ENCODE measurements at regions of chr4 and their contacts with region 1.

Region 1: DNA sequence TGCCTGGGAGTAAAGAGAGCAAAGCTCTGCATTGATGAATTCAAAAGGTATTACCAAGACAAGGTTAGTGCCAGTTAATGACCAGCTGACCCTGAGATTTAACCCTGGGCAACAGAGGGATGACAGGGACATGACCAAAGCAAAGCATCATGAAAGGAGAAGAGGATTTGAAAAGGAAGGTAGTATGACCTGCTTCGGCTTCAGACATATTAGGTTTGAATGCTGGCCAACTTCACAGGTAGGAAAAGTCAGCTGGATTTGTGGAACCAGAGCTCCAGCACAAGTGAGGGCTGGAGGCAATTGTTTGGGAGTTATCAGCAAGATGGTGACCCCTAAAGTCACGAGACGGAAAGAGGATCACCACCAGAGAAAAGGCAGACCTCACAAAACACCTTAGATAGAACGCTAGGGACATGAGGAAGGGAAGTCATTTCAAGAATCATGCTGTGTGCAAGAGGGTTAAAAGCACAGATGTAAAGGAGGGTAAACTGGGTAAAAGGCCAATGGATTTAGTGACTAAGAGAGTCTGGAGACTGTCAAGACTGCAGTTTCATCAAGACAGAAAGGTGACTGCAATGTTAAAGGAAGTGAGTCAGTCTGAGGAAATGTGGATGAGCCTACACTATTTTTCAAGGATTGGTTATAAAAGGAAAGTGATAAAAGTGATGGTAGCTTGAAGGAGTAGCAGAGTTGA is 45.6 kb downstream of the SH3RF1 start:
- DNase-seq: peak; percentile 18 to 86
- H3K4me3 ChIP-seq: no peak overlapping the region
- H3K27ac ChIP-seq: peak overlapping the region; percentile 88
- H3K4me1 ChIP-seq: peaks cover 37% of the 10 kb centered on the region
- H3K27me3 ChIP-seq: no peaks in the 10 kb centered on the region
- CTCF ChIP-seq: no peak

Region 2: DNA sequence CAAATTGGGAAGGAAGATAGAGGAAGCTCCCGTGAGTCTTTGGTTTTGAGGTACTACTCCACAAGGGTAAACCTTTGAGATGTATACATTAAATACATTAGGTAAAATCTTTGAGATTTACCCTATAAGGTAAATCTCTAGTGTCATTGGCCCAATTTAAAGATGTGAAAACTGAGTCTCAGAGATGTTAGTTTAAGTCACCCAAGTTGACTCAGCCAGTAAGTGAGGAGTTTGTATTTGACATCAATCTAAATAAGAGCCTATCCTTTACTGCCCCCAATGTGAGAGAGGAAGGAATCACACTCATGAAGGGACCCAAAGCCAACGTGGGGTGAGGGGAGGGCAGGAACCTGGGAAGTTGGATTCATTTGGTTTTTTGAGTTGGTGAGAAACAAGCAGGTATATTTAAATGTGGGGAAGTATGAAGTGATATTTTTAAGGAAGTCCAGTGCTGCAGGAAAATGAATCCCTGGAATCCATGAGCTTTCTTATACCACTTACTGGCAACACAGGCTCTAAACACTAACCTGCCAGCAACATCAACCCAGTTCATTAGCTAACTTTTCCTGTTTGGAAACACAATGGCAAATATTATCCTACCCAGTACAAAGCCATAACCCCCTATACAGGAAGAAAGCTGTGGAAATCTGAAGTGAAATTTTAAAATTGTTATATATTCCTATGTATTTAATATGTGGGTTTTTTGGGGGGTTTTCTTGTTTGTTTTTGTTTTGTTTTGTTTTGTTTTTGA is 673.1 kb before region 1 on chr4:
- CTCF ChIA-PET with region 1: no interaction called
- POLR2A ChIA-PET with region 1: no interaction called
- intact Hi-C with region 1: no loop called
- DNase-seq: no peak
- H3K4me3 ChIP-seq: no peak overlapping the region
- H3K27ac ChIP-seq: peak overlapping the region; percentile 51
- H3K4me1 ChIP-seq: peaks cover 13% of the 10 kb centered on the region; the same call in 1 of the 2 replicates
- H3K27me3 ChIP-seq: no peaks in the 10 kb centered on the region
- CTCF ChIP-seq: no peak

Region 3: DNA sequence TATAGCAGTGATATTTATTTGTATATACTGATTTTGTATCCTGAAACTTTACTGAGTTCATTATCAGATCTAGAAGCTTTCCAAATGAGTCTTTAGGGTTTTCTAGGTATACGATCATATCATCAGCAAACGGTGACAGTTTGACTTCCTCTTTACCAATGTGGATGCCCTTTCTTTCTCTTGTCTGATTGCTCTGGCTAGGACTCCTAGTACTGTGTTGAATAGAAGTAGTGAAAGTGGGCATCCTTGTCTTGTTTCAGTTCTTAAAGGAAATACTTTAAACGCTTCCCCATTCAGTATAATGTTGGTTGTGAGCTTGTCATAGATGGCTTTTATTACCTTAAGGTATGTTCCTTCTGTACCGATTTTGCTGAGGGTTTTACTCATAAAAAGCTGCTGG is 252.6 kb before region 1 on chr4:
- CTCF ChIA-PET with region 1: no interaction called
- POLR2A ChIA-PET with region 1: no interaction called
- intact Hi-C with region 1: no loop called
- DNase-seq: no peak
- H3K4me3 ChIP-seq: no peak overlapping the region
- H3K27ac ChIP-seq: no peak overlapping the region
- H3K4me1 ChIP-seq: no peaks in the 10 kb centered on the region
- H3K27me3 ChIP-seq: no peaks in the 10 kb centered on the region
- CTCF ChIP-seq: no peak

Region 4: GRCh38 chr4:169099771-169100180 is 125.4 kb before region 1 on chr4:
- CTCF ChIA-PET with region 1: no interaction called
- POLR2A ChIA-PET with region 1: no interaction called
- intact Hi-C with region 1: loop called (anchors 5 kb)
- DNase-seq: no peak
- H3K4me3 ChIP-seq: no peak overlapping the region
- H3K27ac ChIP-seq: no peak overlapping the region
- H3K4me1 ChIP-seq: 0 out of 2 replicates have a peak, but pooled peaks cover 12% of the 10 kb centered on the region
- H3K27me3 ChIP-seq: no peaks in the 10 kb centered on the region
- CTCF ChIP-seq: no peak

Region 5: DNA sequence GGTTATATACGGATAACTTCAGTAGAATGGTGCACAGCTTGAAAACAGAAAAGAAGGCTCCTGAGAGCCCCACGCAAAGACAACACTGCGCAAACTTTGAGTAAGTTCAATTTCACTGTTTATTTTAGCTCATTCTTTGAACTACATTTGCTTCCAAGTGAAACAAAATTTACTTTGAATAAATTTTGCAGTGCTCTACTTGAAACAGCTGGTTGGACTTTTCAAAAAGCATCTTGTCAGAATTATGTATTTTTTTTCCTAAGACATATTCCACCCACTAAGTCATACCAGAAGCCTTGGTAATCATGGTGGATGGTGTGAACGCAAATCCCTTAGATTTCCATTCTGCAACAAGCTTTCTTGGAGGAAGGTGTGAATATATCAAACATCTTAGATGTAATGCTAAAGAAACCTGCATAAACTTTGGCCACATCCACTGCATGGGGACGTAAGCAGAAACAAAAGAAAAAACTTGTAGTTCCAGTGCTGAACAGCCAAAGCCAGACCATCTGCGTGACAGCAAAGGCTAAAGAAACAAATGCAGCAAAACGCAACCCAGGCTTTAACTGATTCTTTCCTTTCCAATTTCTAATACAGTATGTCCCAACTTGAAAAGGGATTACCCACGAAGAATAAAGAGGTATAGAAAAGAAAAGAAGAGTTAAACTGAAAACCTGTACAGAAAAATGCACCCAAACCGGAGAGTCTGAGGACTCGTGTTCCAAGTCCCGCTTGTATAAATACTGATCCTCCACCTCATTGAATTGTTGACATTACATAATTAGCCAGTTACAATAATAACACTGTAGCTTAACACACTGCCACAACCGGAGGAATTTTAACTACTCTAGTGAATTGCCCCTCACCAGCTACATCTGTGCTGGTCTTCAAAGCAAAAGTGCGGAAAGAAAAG is 45.3 kb before region 1 on chr4:
- CTCF ChIA-PET with region 1: no interaction called
- POLR2A ChIA-PET with region 1: no interaction called
- intact Hi-C with region 1: loop called (anchors 5 kb)
- DNase-seq: no peak
- H3K4me3 ChIP-seq: no peak overlapping the region
- H3K27ac ChIP-seq: no peak overlapping the region
- H3K4me1 ChIP-seq: peaks cover 13% of the 10 kb centered on the region
- H3K27me3 ChIP-seq: no peaks in the 10 kb centered on the region
- CTCF ChIP-seq: no peak

Region 6: GRCh38 chr4:169201222-169202144 is 23.7 kb before region 1 on chr4:
- CTCF ChIA-PET with region 1: no interaction called
- POLR2A ChIA-PET with region 1: no interaction called
- intact Hi-C with region 1: no loop called
- DNase-seq: no peak
- H3K4me3 ChIP-seq: no peak overlapping the region
- H3K27ac ChIP-seq: no peak overlapping the region
- H3K4me1 ChIP-seq: peaks cover 26% of the 10 kb centered on the region
- H3K27me3 ChIP-seq: no peaks in the 10 kb centered on the region
- CTCF ChIP-seq: no peak